Heart right ventricle (tissue), 16 donors: ENCODE measurements at regions of chr13 and their contacts with region 1.

Region 1: DNA sequence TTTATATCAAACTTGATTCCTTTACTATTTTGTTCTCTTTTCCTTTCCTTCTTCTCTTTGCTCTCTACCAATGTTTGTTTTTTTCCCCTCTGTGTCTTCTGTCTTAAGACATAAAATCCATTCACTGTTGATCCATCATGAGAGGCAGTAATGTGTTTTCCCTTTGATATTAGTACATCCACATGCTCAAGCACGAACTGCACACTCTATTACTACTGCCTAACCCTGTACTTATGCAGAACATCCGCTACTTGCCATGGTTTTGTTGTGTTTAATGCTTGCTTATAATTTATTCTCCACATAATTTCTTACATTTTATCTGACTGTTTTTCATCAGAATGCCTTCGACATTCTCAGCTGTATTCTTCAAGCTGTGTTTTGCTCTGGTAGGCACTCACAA is 159.0 kb upstream of the PCDH9 start:
- DNase-seq: no peak
- ATAC-seq: no peak
- H3K4me3 ChIP-seq: no peak overlapping the region
- H3K27ac ChIP-seq: no peak overlapping the region
- H3K4me1 ChIP-seq: no peaks in the 10 kb centered on the region
- H3K27me3 ChIP-seq: no peaks in the 10 kb centered on the region
- CTCF ChIP-seq: no peak

Region 2: GRCh38 chr13:67440236-67440975 is 51.2 kb after region 1 on chr13:
- intact Hi-C with region 1: loop called in 1 of 10 experiments (anchors 10 kb)
- DNase-seq: no peak
- ATAC-seq: no peak
- H3K4me3 ChIP-seq: no peak overlapping the region
- H3K27ac ChIP-seq: no peak overlapping the region
- H3K4me1 ChIP-seq: no peaks in the 10 kb centered on the region
- H3K27me3 ChIP-seq: no peaks in the 10 kb centered on the region
- CTCF ChIP-seq: no peak

Region 3: GRCh38 chr13:67474114-67474513 is 84.9 kb after region 1 on chr13:
- intact Hi-C with region 1: no loop called
- DNase-seq: no peak
- ATAC-seq: no peak
- H3K4me3 ChIP-seq: no peak overlapping the region
- H3K27ac ChIP-seq: no peak overlapping the region
- H3K4me1 ChIP-seq: no peaks in the 10 kb centered on the region
- H3K27me3 ChIP-seq: no peaks in the 10 kb centered on the region
- CTCF ChIP-seq: no peak